WTC11 (cell line): ENCODE measurements at regions of chr5 and their contacts with region 1.

Region 1: GRCh38 chr5:4563400-4563799 is 576.7 kb upstream of the ADAMTS16 start:
- DNase-seq: peak; percentile 66
- ATAC-seq: peak; percentile 97
- H3K4me3 Mint-ChIP-seq: no peak overlapping the region
- H3K27ac Mint-ChIP-seq: no peak overlapping the region
- H3K4me1 Mint-ChIP-seq: no peaks in the 10 kb centered on the region
- H3K27me3 Mint-ChIP-seq: no peaks in the 10 kb centered on the region; the same call in 1 of the 2 replicates
- CTCF ChIP-seq: peak; percentile 62

Region 2: GRCh38 chr5:4199049-4199841 is 364.2 kb before region 1 on chr5:
- CTCF ChIA-PET with region 1: interaction called, 10 read pairs
- POLR2A ChIA-PET with region 1: no interaction called
- DNase-seq: peak; percentile 23
- ATAC-seq: peak; percentile 75
- H3K4me3 Mint-ChIP-seq: no peak overlapping the region
- H3K27ac Mint-ChIP-seq: no peak overlapping the region; the same call in 1 of the 2 replicates
- H3K4me1 Mint-ChIP-seq: peaks cover 43% of the 10 kb centered on the region
- H3K27me3 Mint-ChIP-seq: peaks cover 6% of the 10 kb centered on the region
- CTCF ChIP-seq: no peak

Region 3: GRCh38 chr5:4306057-4306456 is 257.3 kb before region 1 on chr5:
- CTCF ChIA-PET with region 1: interaction called, 10 read pairs
- POLR2A ChIA-PET with region 1: no interaction called
- DNase-seq: no peak
- ATAC-seq: no peak
- H3K4me3 Mint-ChIP-seq: no peak overlapping the region
- H3K27ac Mint-ChIP-seq: no peak overlapping the region
- H3K4me1 Mint-ChIP-seq: peaks cover 2% of the 10 kb centered on the region; the same call in 1 of the 2 replicates
- H3K27me3 Mint-ChIP-seq: no peaks in the 10 kb centered on the region
- CTCF ChIP-seq: no peak